Activated CD4-positive, alpha-beta memory T cell treated with anti-CD3 and anti-CD28 coated beads for 36 hours (primary cell): ENCODE measurements at regions of chr11 and their contacts with region 1.

Region 1: GRCh38 chr11:46537537-46538295 is 56.1 kb downstream of the AMBRA1 start:
- DNase-seq: peak; percentile 76
- H3K4me3 Mint-ChIP-seq: no peak overlapping the region
- H3K27ac Mint-ChIP-seq: no peak overlapping the region
- H3K4me1 Mint-ChIP-seq: peaks cover 14% of the 10 kb centered on the region
- H3K27me3 Mint-ChIP-seq: no peaks in the 10 kb centered on the region

Region 2: DNA sequence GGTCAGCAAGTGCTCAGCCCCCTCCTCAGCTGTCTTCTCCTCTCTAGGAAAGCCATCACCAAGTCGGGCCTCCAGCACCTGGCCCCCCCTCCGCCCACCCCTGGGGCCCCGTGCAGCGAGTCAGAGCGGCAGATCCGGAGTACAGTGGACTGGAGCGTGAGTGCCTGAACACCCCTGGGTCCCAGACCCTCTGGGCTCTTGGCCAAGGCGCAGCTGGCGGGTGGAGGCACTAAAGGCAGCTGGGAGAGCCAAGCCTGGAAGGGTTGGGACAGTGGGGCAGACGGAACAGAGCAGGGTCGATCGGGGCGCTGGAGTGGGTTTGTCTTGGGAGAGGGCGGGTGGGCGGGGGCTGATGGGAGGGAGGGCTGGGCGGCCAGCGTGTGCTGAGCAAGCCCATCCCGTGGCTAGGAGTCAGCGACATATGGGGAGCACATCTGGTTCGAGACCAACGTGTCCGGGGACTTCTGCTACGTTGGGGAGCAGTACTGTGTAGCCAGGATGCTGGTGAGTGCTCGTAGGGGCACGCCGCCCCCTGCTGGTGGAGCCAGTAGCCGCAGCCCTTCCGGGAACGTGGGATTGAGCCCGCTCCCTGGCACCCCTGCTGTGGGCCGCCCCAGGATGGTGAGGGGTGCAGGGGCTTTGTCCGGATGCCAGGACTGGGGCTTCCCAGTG is 170.3 kb before region 1 on chr11:
- CTCF ChIA-PET with region 1: interaction called, 3 read pairs
- POLR2A ChIA-PET with region 1: no interaction called
- intact Hi-C with region 1: loop called (anchors 5 kb)
- DNase-seq: peak; percentile 84
- H3K4me3 Mint-ChIP-seq: no peak overlapping the region
- H3K27ac Mint-ChIP-seq: peak overlapping the region; percentile 67
- H3K4me1 Mint-ChIP-seq: peaks cover 38% of the 10 kb centered on the region
- H3K27me3 Mint-ChIP-seq: no peaks in the 10 kb centered on the region

Region 3: DNA sequence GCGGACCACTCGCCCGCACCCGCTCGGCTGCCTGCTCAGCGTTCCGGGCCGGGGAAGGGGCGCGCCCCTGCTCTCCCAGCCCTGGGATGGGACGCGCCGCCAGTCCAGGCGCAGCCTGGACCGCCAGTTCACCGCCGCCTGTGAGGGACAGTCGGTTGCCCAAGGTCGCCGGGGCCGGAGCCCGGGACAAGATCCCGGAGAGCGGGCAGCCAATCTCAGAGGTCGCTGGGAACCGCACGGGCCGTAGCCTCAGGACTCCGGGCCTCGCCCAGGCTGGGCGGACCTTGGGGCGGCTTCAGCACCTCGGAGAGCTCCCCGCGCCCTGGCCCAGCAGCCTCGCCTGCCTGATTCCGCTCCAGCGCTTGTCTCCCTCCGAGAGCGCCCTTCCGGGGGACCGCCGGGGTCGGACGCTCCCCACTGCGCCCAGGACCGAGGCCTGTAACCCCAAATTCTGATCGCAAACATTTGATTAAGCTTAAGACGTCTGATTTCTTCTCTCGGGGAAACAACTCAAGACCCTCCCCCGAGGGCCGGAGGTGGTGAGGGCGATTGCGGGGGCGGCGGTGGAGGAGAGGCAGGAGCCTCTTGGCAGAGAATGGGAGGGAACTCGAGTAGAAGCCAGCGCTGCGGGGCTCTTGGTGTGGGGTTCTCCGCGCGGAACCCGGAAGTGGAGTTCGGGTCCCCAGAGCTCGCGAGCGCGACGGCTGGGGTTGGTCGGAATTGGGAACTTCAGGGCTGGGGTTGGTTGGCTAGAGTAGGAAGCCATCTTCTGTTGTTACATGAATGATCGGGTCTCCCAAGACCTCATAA is 145.1 kb before region 1 on chr11:
- CTCF ChIA-PET with region 1: interaction called, 53 read pairs
- POLR2A ChIA-PET with region 1: no interaction called
- intact Hi-C with region 1: loop called (anchors 2 kb)
- DNase-seq: peak; percentile 87
- H3K4me3 Mint-ChIP-seq: peak overlapping the region; percentile 71
- H3K27ac Mint-ChIP-seq: no peak overlapping the region
- H3K4me1 Mint-ChIP-seq: peaks cover 27% of the 10 kb centered on the region
- H3K27me3 Mint-ChIP-seq: peaks cover 37% of the 10 kb centered on the region

Region 4: GRCh38 chr11:46625391-46625790 is 87.7 kb after region 1 on chr11:
- CTCF ChIA-PET with region 1: no interaction called
- POLR2A ChIA-PET with region 1: no interaction called
- intact Hi-C with region 1: no loop called
- DNase-seq: no peak
- H3K4me3 Mint-ChIP-seq: no peak overlapping the region
- H3K27ac Mint-ChIP-seq: no peak overlapping the region
- H3K4me1 Mint-ChIP-seq: peaks cover 11% of the 10 kb centered on the region
- H3K27me3 Mint-ChIP-seq: no peaks in the 10 kb centered on the region